ENCODE measurements at regions of chr7 and their contacts with region 1.

Region 1: DNA sequence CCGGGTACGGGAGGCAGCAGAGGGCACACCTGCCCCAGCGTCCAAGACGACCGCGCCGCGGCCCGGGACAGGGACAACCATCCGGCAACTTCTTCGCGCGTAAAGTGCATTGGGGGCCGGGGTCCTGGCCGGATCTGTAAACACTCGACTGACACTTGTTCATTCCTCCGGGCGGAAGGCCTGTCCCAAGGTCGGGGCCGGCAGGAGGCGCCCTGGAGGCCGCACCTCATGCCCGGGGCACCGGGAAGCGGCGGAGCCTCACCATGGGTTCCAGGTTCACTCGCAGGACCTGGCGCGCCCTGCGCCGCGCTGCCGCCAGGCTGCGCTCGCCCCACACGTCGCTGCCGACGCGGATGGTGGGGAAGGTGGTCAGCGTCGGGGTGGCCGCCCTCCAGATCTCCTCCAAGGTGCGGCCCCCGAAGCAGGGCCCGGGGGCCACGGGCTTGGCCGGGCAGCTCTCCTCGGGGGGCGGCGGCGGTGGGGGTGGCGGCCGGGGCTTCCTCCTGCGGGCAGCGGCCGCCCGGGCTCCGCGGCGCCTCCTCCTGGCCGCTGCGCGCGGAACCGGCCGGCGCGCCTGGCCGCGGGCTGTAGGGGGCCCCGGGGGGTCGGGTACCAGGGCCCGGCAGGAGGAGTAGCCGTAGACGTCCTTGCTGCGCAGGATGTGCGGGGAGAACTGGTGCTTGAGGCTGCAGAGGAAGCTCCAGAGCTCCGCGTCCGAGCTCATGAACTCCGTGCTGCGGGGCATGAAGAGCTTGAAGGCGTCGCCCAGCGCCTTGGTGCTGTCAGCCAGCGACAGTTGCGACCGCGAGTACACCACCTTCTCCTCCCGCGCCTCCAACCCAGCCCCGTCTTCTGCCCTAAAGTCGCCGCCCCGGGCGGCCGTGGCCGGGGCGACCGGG is 746 bp downstream of the CCDC71L start:
- DNase-seq: peak; percentile 87 to 92
- ATAC-seq: peak; percentile 86 to 87
- H3K4me3 ChIP-seq: peak overlapping the region; percentile 88
- H3K27ac ChIP-seq: peak overlapping the region; percentile 90 to 94
- H3K4me1 ChIP-seq: peaks cover 9% of the 10 kb centered on the region; the same call in 2 of the 3 replicates
- CTCF ChIP-seq: peak; percentile 99
- EP300 ChIP-seq: no peak
- POLR2A ChIP-seq: no peak; the same call in 1 of the 2 replicates
- RAD21 ChIP-seq: peak; percentile 58 to 87

Region 2: DNA sequence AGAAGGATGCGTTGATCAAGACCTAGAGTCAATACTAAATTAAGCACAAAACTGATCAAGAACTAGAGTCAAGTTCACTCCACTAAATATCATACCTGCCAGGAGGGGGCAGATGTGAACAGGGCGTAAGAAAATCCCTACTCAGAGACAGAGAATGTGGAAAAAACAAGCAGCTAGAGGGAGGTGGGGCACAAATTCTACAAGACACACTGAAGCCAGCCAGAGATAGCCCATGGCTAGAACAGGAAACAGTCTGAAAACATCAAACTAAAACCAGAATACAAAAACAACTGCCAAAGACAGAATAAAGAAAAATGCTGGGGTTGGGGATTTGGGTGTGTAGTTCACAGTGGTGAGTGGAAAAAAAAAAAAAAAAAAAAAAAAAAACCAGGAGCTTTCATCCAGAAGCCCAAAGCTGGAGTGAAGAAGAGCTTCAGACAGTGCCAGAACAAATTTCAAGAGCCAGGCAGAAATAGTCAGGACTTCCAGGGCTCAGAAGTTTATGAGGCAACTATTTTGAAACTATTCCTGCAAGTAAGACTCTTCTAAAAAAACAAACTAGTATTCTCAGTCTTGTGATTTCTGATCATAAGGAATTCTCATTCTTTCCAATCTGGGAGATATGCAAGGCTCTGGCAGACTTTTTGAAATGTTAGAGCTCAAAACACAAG is 117.5 kb before region 1 on chr7:
- CTCF ChIA-PET with region 1: interaction called, 35 read pairs
- POLR2A ChIA-PET with region 1: interaction called, 4 read pairs
- DNase-seq: peak; percentile 25 to 75
- ATAC-seq: peak; percentile 89 to 97
- H3K4me3 ChIP-seq: no peak overlapping the region
- H3K27ac ChIP-seq: peak overlapping the region in 1 of 2 experiments; percentile 20; a peak in 2 of 6 replicates
- H3K4me1 ChIP-seq: peaks cover 6% of the 10 kb centered on the region; the same call in 1 of the 3 replicates
- CTCF ChIP-seq: peak; percentile 66
- EP300 ChIP-seq: no peak
- POLR2A ChIP-seq: no peak
- RAD21 ChIP-seq: peak; percentile 68 to 70

Region 3: DNA sequence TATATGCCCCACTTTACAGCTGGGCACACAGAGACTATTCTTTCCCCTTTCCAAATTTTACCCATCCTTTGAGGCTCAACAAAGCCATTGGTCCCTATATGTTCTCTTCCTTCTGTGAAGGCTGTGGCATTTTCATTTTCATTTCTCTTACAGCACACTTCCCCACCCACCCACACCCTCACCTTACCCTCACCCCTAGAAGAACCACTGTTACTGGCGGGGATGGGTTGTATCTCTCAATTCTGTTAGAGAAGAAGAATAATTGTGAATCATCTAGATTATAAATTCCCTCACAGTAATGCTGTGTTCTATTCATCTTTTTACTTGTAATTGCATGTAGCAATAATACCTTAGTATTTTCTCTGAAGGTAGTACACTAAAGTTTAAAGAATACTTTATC is 10.9 kb after region 1 on chr7:
- CTCF ChIA-PET with region 1: interaction called, 27 read pairs
- POLR2A ChIA-PET with region 1: no interaction called
- DNase-seq: no peak
- ATAC-seq: no peak
- H3K4me3 ChIP-seq: no peak overlapping the region
- H3K27ac ChIP-seq: no peak overlapping the region
- H3K4me1 ChIP-seq: no peaks in the 10 kb centered on the region
- CTCF ChIP-seq: no peak
- EP300 ChIP-seq: no peak
- POLR2A ChIP-seq: no peak
- RAD21 ChIP-seq: no peak

Region 4: DNA sequence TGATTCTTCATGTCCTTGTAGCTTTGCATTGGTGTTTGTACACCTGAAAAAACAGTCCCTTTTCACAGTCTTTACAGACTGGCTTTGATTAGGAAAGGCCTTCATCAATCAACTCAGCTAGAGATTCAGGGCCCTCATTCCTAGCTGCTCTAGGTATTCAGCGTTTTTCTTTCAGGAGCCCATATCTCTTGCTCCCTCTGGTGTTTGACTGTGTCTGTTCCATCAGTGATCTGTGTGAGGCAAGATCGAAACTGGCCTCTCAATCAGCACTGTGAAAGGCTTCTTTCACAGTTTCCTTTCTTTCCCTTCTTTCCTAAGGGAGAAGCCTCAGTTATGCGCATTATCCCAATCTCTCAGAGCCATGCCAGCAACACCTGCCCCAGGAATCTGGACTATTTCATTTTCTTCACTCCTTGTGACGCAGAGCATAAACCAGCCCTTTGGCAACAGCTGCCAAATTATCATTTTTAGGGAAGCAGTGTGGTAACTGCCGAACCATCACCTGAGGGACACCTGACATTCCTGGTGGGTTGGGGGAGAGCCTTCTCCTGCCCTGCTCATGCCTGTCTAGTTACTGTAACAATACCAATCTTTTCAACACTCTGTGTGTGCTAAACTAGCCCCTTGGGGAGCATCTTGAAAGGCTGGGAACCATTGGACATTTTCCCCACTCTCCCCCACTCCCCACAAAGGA is 76.4 kb after region 1 on chr7:
- CTCF ChIA-PET with region 1: interaction called, 60 read pairs
- POLR2A ChIA-PET with region 1: interaction called, 3 read pairs
- DNase-seq: peak; percentile 32 to 61
- ATAC-seq: peak; percentile 91 to 96
- H3K4me3 ChIP-seq: no peak overlapping the region
- H3K27ac ChIP-seq: peak overlapping the region in 1 of 2 experiments; percentile 66; a peak in 3 of 6 replicates
- H3K4me1 ChIP-seq: no peaks in the 10 kb centered on the region
- CTCF ChIP-seq: peak; percentile 41
- EP300 ChIP-seq: no peak
- POLR2A ChIP-seq: no peak
- RAD21 ChIP-seq: peak; percentile 52 to 56

Region 5: GRCh38 chr7:106767078-106767477 is 106.9 kb after region 1 on chr7:
- CTCF ChIA-PET with region 1: interaction called, 13 read pairs
- POLR2A ChIA-PET with region 1: no interaction called
- DNase-seq: no peak
- ATAC-seq: no peak
- H3K4me3 ChIP-seq: no peak overlapping the region
- H3K27ac ChIP-seq: no peak overlapping the region
- H3K4me1 ChIP-seq: peaks cover 17% of the 10 kb centered on the region
- CTCF ChIP-seq: no peak
- EP300 ChIP-seq: no peak
- POLR2A ChIP-seq: no peak
- RAD21 ChIP-seq: no peak

Measured in A549 (cell line).